SK-N-SH (cell line): ENCODE measurements at regions of chr6 and their contacts with region 1.

Region 1: DNA sequence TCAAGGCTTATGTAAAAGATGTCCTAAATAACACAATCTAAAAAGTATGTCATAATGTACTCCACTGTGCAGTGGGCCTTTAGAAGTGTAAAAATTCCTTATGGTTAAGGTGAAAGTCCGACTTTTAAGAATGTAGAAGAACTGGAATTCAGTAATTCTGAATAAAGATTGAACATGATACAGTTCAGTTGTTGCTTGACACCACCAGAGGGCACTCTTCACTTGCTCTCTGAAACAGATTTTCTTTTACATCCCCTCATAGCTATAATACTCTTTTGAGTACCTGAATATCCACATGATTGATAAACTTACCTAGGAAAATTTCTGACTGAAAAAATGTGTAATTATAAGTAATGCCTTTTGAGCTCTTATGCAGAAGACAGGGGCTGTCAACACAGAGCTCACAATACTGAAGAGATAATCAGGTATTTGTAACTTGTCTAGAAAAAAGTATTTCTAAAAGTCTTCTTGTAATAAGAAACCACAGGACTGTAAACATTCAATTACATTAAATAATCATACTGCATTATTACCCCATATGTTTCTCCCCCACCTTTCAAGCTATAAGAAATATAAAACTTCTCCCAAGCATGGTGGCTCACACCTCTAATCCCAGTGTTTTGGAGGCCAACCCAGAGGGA is 92.1 kb downstream of the POPDC3 start:
- DNase-seq: peak; percentile 53
- H3K4me3 ChIP-seq: no peak overlapping the region; a peak in 1 of 4 replicates
- H3K27ac ChIP-seq: no peak overlapping the region
- H3K4me1 ChIP-seq: no peaks in the 10 kb centered on the region; a peak in 1 of 4 replicates
- H3K27me3 ChIP-seq: no peaks in the 10 kb centered on the region
- CTCF ChIP-seq: peak; percentile 92
- EP300 ChIP-seq: no peak
- RAD21 ChIP-seq: peak; percentile 97

Region 2: GRCh38 chr6:105105094-105105493 is 17.4 kb after region 1 on chr6:
- CTCF ChIA-PET with region 1: interaction called, 15 read pairs
- POLR2A ChIA-PET with region 1: no interaction called
- DNase-seq: no peak
- H3K4me3 ChIP-seq: no peak overlapping the region
- H3K27ac ChIP-seq: no peak overlapping the region
- H3K4me1 ChIP-seq: peaks cover 0 to 3% of the 10 kb centered on the region in 2 experiments; a peak in 1 of 4 replicates
- H3K27me3 ChIP-seq: no peaks in the 10 kb centered on the region
- CTCF ChIP-seq: no peak
- EP300 ChIP-seq: no peak
- RAD21 ChIP-seq: no peak

Region 3: GRCh38 chr6:105109955-105110895 is 22.5 kb after region 1 on chr6:
- CTCF ChIA-PET with region 1: interaction called, 12 read pairs
- POLR2A ChIA-PET with region 1: no interaction called
- DNase-seq: no peak
- H3K4me3 ChIP-seq: no peak overlapping the region
- H3K27ac ChIP-seq: no peak overlapping the region
- H3K4me1 ChIP-seq: peaks cover 0 to 3% of the 10 kb centered on the region in 2 experiments; a peak in 1 of 4 replicates
- H3K27me3 ChIP-seq: no peaks in the 10 kb centered on the region
- CTCF ChIP-seq: no peak
- EP300 ChIP-seq: no peak
- RAD21 ChIP-seq: no peak

Region 4: DNA sequence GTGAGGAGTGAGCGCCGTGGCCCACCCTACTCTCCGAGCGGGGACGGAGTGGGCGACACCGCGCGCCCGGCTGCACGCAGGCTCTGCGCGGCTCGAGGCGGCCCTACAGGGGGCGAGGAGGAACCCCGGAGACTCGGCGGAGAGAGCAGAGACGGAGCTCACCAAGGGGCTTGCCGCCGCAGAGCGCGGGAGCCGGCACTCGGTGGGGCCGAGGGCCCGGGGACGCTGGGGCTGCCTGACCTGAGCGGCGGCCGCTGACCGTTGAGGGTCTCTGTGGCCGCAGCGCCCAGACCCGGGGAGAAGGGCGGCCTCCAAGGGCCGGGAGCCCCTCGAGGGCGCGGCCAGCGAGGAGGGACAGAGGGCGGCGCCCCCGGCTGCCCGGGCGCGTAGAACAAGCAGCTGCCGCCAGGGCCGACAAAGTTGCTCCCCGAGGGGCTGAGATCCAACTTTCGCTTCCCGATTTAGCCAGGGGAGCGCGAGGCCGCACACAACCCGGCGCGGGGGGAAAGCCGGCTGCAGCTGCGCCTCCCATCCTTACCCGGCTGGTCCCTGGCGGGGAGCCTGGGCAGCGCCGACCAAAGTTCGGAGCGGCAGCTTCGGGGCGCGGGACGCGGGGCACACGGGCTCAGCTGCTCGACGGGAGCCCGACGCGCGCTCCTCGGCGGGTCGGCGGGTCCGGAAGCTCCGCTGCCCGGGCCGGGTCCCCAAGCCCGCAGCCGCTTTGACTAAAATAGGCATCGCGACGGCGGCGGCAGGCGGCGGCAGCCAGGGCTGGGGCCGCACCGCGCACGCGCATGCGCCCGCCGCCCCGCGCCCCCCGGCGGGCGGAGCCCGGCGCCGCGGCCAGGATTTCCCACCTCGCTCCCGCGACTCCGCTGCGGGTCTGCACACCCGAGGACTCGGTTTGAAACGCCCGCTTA is 49.0 kb after region 1 on chr6:
- CTCF ChIA-PET with region 1: interaction called, 10 read pairs
- POLR2A ChIA-PET with region 1: no interaction called
- DNase-seq: peak; percentile 97
- H3K4me3 ChIP-seq: peak overlapping the region; percentile 85 to 90
- H3K27ac ChIP-seq: peak overlapping the region; percentile 50 to 82
- H3K4me1 ChIP-seq: peaks cover 0 to 8% of the 10 kb centered on the region in 2 experiments; a peak in 2 of 4 replicates
- H3K27me3 ChIP-seq: no peaks in the 10 kb centered on the region
- CTCF ChIP-seq: peak; percentile 35
- EP300 ChIP-seq: peak in 1 of 2 experiments; percentile 19; a peak in 1 of 4 replicates
- RAD21 ChIP-seq: no peak

Region 5: DNA sequence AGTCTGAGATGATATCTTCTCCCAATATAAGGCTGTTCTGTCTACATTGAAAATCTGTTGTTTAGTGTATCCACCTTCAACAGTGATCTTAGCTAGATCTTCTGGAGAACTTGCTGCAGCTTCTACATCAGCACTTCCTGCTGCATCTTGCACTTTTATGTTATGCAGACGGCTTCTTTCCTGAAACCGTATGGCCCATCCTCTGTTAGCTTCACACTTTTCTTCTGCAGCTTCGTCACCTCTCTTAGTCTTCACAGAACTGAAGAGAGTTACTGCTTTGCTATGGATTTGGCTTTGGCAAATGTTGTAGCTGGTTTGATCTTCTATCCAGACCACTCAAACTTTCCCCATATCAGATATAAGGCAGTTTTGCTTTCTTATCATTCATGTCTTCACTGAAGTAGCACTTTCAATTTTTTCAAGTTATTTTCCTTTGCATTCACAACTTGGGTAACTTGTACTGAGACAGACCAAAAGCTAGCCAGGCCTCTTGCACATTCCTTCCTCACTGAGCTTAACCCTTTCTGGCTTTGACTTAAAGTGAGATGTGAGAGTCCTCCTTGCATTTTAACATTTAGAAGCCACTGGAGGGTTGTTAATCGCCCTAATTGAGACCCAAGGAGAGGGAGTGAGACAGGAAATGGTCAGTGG is 205.1 kb after region 1 on chr6:
- CTCF ChIA-PET with region 1: no interaction called
- POLR2A ChIA-PET with region 1: no interaction called
- DNase-seq: no peak
- H3K4me3 ChIP-seq: no peak overlapping the region
- H3K27ac ChIP-seq: no peak overlapping the region
- H3K4me1 ChIP-seq: peaks cover 0 to 2% of the 10 kb centered on the region in 2 experiments; a peak in 2 of 4 replicates
- H3K27me3 ChIP-seq: no peaks in the 10 kb centered on the region
- CTCF ChIP-seq: no peak
- EP300 ChIP-seq: no peak
- RAD21 ChIP-seq: no peak

Region 6: DNA sequence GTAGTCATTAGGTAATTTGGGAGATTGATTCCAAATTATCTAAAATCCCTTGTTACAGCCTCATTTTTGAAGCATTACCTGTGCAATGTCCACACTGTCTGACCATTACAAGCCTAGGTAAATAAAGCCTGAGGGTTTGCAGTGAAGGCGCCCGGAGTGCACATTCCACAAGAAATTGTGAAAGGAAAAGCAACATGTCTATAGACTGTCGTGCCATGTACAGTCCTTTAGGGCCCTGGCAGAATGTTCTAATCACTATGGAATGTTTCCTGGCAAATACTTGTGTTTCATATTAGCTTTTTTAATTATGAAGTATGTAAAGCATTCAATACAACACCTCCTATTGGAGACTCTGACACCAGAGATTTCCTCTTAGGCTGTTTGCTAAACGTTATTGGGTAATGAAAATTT is 286.3 kb after region 1 on chr6:
- CTCF ChIA-PET with region 1: interaction called, 25 read pairs
- POLR2A ChIA-PET with region 1: no interaction called
- DNase-seq: no peak
- H3K4me3 ChIP-seq: no peak overlapping the region
- H3K27ac ChIP-seq: no peak overlapping the region; a peak in 1 of 4 replicates
- H3K4me1 ChIP-seq: peaks cover 0 to 2% of the 10 kb centered on the region in 2 experiments; a peak in 3 of 4 replicates
- H3K27me3 ChIP-seq: no peaks in the 10 kb centered on the region
- CTCF ChIP-seq: no peak
- EP300 ChIP-seq: no peak
- RAD21 ChIP-seq: no peak

Region 7: GRCh38 chr6:105402939-105403935 is 315.5 kb after region 1 on chr6 and contains the start of gene PREP:
- CTCF ChIA-PET with region 1: interaction called, 58 read pairs
- POLR2A ChIA-PET with region 1: no interaction called
- DNase-seq: peak; percentile 94
- H3K4me3 ChIP-seq: peak within 1 kb of the TSS; percentile 86 to 98
- H3K27ac ChIP-seq: peak within 1 kb of the TSS; percentile 71 to 94
- H3K4me1 ChIP-seq: peaks cover 0 to 22% of the 10 kb centered on the region in 2 experiments; a peak in 2 of 4 replicates
- H3K27me3 ChIP-seq: no peaks in the 10 kb centered on the region
- CTCF ChIP-seq: peak; percentile 89
- EP300 ChIP-seq: no peak
- RAD21 ChIP-seq: peak; percentile 62
- polyA plus RNA-seq, gene PREP: 15.9 and 20.9 TPM in 2 replicates

Region 8: DNA sequence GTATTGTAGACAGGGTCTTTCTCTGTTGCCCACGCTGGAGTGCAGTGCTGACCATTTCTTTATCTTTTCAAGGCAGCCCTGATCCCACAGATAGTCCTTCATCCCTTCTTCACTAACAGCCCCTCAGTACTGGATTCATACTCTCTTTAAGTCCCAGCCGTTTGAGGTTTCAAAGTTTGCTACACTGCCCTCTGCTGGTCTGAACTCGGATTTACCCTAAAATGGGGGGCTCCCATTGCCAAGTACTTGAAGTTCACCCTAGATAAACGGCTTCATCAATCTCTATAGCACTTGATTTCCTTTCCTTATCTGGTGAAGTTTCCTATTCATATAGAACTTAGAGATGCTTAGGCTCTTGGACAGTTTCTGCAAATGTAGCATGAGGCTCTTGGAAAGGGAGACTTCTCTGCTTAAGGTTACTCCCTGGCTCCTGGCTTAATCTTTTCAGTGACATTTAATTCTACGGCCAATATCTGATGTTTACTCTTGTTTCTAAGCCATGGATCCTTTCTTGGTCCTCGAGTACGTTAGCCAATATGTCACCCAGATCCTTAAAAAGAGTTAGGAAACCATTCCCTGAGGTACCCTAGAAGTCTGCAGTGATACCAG is 336.6 kb after region 1 on chr6:
- CTCF ChIA-PET with region 1: interaction called, 23 read pairs
- POLR2A ChIA-PET with region 1: no interaction called
- DNase-seq: peak; percentile 65
- H3K4me3 ChIP-seq: no peak overlapping the region; a peak in 1 of 4 replicates
- H3K27ac ChIP-seq: no peak overlapping the region
- H3K4me1 ChIP-seq: peaks cover 0 to 6% of the 10 kb centered on the region in 2 experiments; a peak in 1 of 4 replicates
- H3K27me3 ChIP-seq: no peaks in the 10 kb centered on the region
- CTCF ChIP-seq: peak; percentile 80
- EP300 ChIP-seq: no peak
- RAD21 ChIP-seq: peak; percentile 62